ENCODE measurements at regions of chr9 and their contacts with region 1.

Region 1: GRCh38 chr9:21995177-21996086 is 841 bp downstream of the CDKN2B-AS1 start:
- DNase-seq: peak; percentile 48 to 91 (median 76)
- ATAC-seq: peak; percentile 70
- H3K4me3 ChIP-seq: peak overlapping the region; percentile 81 to 96
- H3K4me3 Mint-ChIP-seq: peak overlapping the region; percentile 96
- H3K27ac ChIP-seq: peak overlapping the region; percentile 75 to 81
- H3K27ac Mint-ChIP-seq: peak overlapping the region; percentile 91
- H3K4me1 ChIP-seq: peaks cover 10% of the 10 kb centered on the region
- H3K4me1 Mint-ChIP-seq: peaks cover 14% of the 10 kb centered on the region
- H3K27me3 ChIP-seq: peaks cover 1 to 12% of the 10 kb centered on the region in 2 experiments
- H3K27me3 Mint-ChIP-seq: peaks cover 20% of the 10 kb centered on the region
- CTCF ChIP-seq: no peak

Region 2: GRCh38 chr9:21465859-21466518 is 529.4 kb before region 1 on chr9:
- CTCF ChIA-PET with region 1: no interaction called
- POLR2A ChIA-PET with region 1: no interaction called
- intact Hi-C with region 1: loop called in 1 of 2 experiments (anchors 10 kb)
- DNase-seq: peak in 2 of 9 experiments; percentile 68 to 75
- ATAC-seq: peak; percentile 77
- H3K4me3 ChIP-seq: no peak overlapping the region
- H3K4me3 Mint-ChIP-seq: no peak overlapping the region
- H3K27ac ChIP-seq: no peak overlapping the region
- H3K27ac Mint-ChIP-seq: no peak overlapping the region
- H3K4me1 ChIP-seq: no peaks in the 10 kb centered on the region
- H3K4me1 Mint-ChIP-seq: peaks cover 2% of the 10 kb centered on the region
- H3K27me3 ChIP-seq: no peaks in the 10 kb centered on the region
- H3K27me3 Mint-ChIP-seq: no peaks in the 10 kb centered on the region
- CTCF ChIP-seq: peak; percentile 71

Region 3: DNA sequence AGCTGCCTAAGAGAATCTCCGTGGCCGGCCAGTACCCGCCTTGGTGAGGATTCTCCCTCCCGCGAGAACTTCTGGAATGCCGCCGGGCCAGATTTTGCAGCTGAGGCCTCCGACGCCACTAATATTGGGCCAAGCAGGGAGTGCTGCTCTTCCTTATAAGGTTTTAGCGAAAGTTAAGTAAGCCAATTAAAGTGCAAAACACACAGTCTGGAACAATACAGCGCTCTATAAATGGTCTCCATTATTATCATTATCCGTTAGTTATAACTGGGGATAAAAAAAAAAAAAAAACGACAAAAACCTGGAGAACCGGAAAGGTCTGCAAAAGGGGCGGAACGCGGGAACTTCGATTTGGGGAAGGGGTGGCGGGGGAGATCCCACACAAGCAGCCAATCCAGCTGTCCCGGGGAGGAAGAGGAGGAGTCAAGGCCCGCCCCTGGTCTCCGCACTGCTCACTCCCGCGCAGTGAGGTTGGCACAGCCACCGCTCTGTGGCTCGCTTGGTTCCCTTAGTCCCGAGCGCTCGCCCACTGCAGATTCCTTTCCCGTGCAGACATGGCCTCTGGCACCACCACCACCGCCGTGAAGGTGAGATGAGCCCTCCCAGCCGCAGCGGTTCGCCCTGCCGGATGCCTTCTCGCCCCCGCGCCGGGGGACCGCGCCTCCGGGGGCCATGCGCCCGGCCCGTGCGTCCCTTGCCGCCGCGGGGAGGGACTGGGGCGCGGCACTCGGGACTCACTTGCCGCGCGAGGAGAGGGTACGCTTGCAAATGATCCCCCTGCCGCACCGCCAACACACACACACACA is 193.0 kb before region 1 on chr9 and contains the start of gene MTAP:
- CTCF ChIA-PET with region 1: no interaction called
- POLR2A ChIA-PET with region 1: no interaction called
- intact Hi-C with region 1: loop called in 1 of 2 experiments (anchors 5 kb)
- DNase-seq: peak; percentile 12 to 80 (median 65)
- ATAC-seq: peak; percentile 74
- H3K4me3 ChIP-seq: peak within 1 kb of the TSS; percentile 80 to 91
- H3K4me3 Mint-ChIP-seq: peak within 1 kb of the TSS; percentile 99
- H3K27ac ChIP-seq: peak within 1 kb of the TSS; percentile 63 to 67
- H3K27ac Mint-ChIP-seq: peak within 1 kb of the TSS; percentile 97
- H3K4me1 ChIP-seq: peaks cover 31% of the 10 kb centered on the region
- H3K4me1 Mint-ChIP-seq: peaks cover 42% of the 10 kb centered on the region
- H3K27me3 ChIP-seq: no peaks in the 10 kb centered on the region
- H3K27me3 Mint-ChIP-seq: peaks cover 5% of the 10 kb centered on the region
- CTCF ChIP-seq: no peak
- total RNA-seq, gene MTAP: 9.9 to 14.3 TPM

Region 4: DNA sequence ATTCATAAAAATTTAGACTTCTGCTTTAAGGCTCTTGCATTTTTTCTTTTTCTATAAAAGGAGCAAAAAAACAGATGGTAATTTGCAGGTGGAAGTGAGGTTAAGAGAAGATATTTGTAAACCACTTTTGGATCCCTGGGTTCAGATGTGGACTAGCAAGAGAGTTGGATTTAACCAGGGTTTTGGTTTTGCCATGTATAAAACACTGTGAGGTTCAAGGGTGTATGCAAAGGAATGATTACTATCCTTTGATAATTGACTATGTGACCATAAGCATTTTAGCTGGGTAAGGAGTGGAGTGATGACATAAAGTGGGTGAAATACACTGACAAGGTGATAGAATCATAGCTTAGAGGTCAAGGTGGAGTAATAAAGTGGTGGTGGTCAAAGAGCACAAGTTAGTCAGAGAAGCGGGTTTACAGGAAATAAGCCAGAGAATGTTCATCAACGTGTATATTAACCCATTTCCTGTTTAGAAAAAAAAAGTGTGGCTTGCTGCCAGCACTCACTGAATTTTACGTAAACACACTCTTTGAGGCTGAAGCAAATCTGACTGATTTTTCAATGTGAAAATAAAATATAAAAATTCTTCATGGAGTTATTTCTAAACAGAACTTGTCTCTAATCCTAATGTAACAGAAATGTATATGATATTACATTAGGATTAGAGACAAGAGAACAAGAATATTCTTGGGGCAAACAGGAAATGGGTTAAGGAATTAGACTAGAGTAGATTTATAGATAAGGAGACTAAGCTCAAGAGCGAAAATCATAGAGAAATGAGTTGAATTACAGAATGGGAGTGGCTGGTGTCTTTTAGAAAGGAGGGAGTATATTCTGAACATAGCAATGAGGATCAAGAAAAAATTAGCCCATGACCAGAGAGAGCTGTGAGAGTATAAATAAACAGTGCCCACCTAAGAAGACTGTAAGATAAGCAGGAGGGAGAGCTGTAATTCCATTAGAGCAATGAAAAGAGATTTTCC is 75.8 kb before region 1 on chr9:
- CTCF ChIA-PET with region 1: no interaction called
- POLR2A ChIA-PET with region 1: no interaction called
- intact Hi-C with region 1: loop called in 1 of 2 experiments (anchors 5 kb)
- DNase-seq: peak in 7 of 9 experiments; percentile 4 to 81 (median 30)
- ATAC-seq: peak; percentile 81
- H3K4me3 ChIP-seq: no peak overlapping the region
- H3K4me3 Mint-ChIP-seq: peak overlapping the region; percentile 24
- H3K27ac ChIP-seq: peak overlapping the region in 1 of 2 experiments; percentile 60
- H3K27ac Mint-ChIP-seq: peak overlapping the region; percentile 75
- H3K4me1 ChIP-seq: peaks cover 10% of the 10 kb centered on the region
- H3K4me1 Mint-ChIP-seq: peaks cover 19% of the 10 kb centered on the region
- H3K27me3 ChIP-seq: no peaks in the 10 kb centered on the region
- H3K27me3 Mint-ChIP-seq: no peaks in the 10 kb centered on the region
- CTCF ChIP-seq: no peak

Region 5: GRCh38 chr9:22030101-22030598 is 34.7 kb after region 1 on chr9:
- CTCF ChIA-PET with region 1: no interaction called
- POLR2A ChIA-PET with region 1: no interaction called
- intact Hi-C with region 1: no loop called
- DNase-seq: peak in 1 of 9 experiments; percentile 8
- ATAC-seq: no peak
- H3K4me3 ChIP-seq: no peak overlapping the region
- H3K4me3 Mint-ChIP-seq: no peak overlapping the region
- H3K27ac ChIP-seq: no peak overlapping the region
- H3K27ac Mint-ChIP-seq: no peak overlapping the region
- H3K4me1 ChIP-seq: no peaks in the 10 kb centered on the region
- H3K4me1 Mint-ChIP-seq: no peaks in the 10 kb centered on the region
- H3K27me3 ChIP-seq: no peaks in the 10 kb centered on the region
- H3K27me3 Mint-ChIP-seq: no peaks in the 10 kb centered on the region
- CTCF ChIP-seq: no peak

Measured in CD8-positive, alpha-beta T cell (primary cell).